Upper lobe of right lung (tissue), 1 donor: ENCODE measurements at regions of chr11 and their contacts with region 1.

Region 1: GRCh38 chr11:117843666-117844484 is 19.3 kb upstream of the FXYD2 start:
- DNase-seq: peak; percentile 89
- ATAC-seq: peak; percentile 85
- H3K4me3 ChIP-seq: no peak overlapping the region
- H3K27ac ChIP-seq: no peak overlapping the region
- H3K4me1 ChIP-seq: peaks cover 6% of the 10 kb centered on the region
- H3K27me3 ChIP-seq: no peaks in the 10 kb centered on the region
- CTCF ChIP-seq: peak; percentile 100

Region 2: GRCh38 chr11:117946842-117947526 is 103.1 kb after region 1 on chr11:
- intact Hi-C with region 1: loop called (anchors 5 kb)
- DNase-seq: peak; percentile 92
- ATAC-seq: peak; percentile 98
- H3K4me3 ChIP-seq: no peak overlapping the region
- H3K27ac ChIP-seq: no peak overlapping the region
- H3K4me1 ChIP-seq: peaks cover 19% of the 10 kb centered on the region
- H3K27me3 ChIP-seq: no peaks in the 10 kb centered on the region
- CTCF ChIP-seq: peak; percentile 99